ENCODE measurements at regions of chr6 and their contacts with region 1.

Region 1: GRCh38 chr6:144248476-144249301 is 36.4 kb upstream of the UTRN start:
- DNase-seq: no peak
- ATAC-seq: no peak
- H3K4me3 ChIP-seq: no peak overlapping the region
- H3K27ac ChIP-seq: no peak overlapping the region
- H3K4me1 ChIP-seq: no peaks in the 10 kb centered on the region
- H3K27me3 ChIP-seq: no peaks in the 10 kb centered on the region
- CTCF ChIP-seq: no peak

Region 2: DNA sequence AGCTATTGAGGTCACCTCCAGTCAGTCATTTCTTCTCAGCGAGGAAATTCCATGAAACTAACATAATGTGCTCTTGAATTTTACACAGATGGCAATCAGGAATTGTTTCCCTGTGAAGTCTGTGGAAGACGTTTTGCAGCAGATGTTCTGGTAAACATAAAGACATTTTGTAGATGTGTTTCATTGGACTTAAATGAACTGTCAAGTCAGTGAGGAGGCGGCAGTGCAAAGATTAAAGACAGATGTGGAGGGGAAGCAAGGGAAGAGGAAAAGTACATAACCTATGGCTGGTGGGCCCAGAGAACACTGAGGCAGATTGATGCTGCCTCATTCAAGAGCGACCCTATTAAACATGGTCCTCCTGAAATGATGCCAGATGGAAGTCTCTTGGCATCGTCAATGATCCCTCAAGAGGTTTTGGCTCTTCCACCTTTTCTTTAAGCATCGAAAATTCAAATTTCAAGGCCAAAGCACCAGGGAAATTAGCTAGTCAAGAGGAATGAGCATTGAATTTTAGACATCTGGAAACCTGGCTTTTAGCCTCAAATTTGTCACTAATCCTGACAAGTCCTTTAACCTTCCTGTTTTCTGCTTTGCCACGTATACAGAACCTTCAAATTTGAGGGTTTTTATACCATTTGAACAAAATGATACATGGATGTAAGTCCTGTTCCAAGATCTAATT is 364.3 kb before region 1 on chr6:
- CTCF ChIA-PET with region 1: no interaction called
- POLR2A ChIA-PET with region 1: no interaction called
- in situ Hi-C with region 1: no loop called
- intact Hi-C with region 1: no loop called
- DNase-seq: no peak
- ATAC-seq: no peak
- H3K4me3 ChIP-seq: no peak overlapping the region
- H3K27ac ChIP-seq: no peak overlapping the region
- H3K4me1 ChIP-seq: no peaks in the 10 kb centered on the region
- H3K27me3 ChIP-seq: peaks cover under 1% of the 10 kb centered on the region; the same call in 1 of the 2 replicates
- CTCF ChIP-seq: no peak

Region 3: GRCh38 chr6:144232176-144232831 is 16.4 kb before region 1 on chr6:
- CTCF ChIA-PET with region 1: interaction called, 10 read pairs
- POLR2A ChIA-PET with region 1: no interaction called
- in situ Hi-C with region 1: no loop called
- intact Hi-C with region 1: no loop called
- DNase-seq: no peak
- ATAC-seq: no peak
- H3K4me3 ChIP-seq: no peak overlapping the region
- H3K27ac ChIP-seq: no peak overlapping the region
- H3K4me1 ChIP-seq: no peaks in the 10 kb centered on the region
- H3K27me3 ChIP-seq: no peaks in the 10 kb centered on the region
- CTCF ChIP-seq: no peak

Region 4: DNA sequence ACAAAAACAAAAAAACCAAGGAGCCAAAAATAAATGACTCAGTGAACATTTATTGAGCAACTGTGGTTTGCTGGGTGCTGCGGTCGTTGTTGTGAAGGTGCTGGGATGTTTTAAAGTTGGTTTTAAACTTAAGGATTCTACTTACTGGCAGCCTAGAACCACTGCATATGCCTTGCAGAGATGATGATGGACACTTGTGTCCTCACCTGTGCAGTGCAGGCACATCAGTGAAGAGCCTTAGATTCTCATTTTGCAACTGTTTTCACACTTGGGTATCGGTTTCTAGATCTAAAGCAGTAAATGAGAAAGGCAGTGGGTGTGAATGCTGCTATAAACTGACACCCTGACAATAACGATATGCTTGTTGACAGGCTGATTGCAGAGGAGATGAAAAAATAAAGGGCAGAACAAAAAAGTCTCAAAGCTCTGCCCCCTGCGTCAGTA is 105.2 kb after region 1 on chr6:
- CTCF ChIA-PET with region 1: no interaction called
- POLR2A ChIA-PET with region 1: no interaction called
- in situ Hi-C with region 1: no loop called
- intact Hi-C with region 1: no loop called
- DNase-seq: no peak
- ATAC-seq: peak; percentile 18; the same call in 1 of the 2 replicates
- H3K4me3 ChIP-seq: no peak overlapping the region
- H3K27ac ChIP-seq: peak overlapping the region; percentile 78
- H3K4me1 ChIP-seq: peaks cover 58% of the 10 kb centered on the region
- H3K27me3 ChIP-seq: no peaks in the 10 kb centered on the region
- CTCF ChIP-seq: no peak

Region 5: DNA sequence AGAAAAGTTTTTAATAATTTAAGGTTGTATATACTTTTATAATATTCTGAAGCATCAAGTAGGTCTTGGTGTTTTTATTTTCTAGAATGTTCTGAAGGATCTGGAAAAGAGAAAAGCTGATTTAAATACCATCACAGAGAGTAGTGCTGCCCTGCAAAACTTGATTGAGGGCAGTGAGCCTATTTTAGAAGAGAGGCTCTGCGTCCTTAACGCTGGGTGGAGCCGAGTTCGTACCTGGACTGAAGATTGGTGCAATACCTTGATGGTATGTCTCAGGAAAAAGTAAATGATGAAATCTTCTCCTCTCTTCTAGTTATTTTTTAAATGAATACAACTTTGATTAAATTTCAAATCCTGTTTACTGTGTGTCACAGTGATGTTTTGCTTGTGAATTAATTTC is 262.2 kb after region 1 on chr6:
- CTCF ChIA-PET with region 1: no interaction called
- POLR2A ChIA-PET with region 1: no interaction called
- in situ Hi-C with region 1: no loop called
- intact Hi-C with region 1: no loop called
- DNase-seq: no peak
- ATAC-seq: no peak
- H3K4me3 ChIP-seq: no peak overlapping the region
- H3K27ac ChIP-seq: no peak overlapping the region
- H3K4me1 ChIP-seq: no peaks in the 10 kb centered on the region
- H3K27me3 ChIP-seq: no peaks in the 10 kb centered on the region
- CTCF ChIP-seq: no peak

Region 6: GRCh38 chr6:145480024-145480423 is 1231.3 kb after region 1 on chr6:
- CTCF ChIA-PET with region 1: no interaction called
- POLR2A ChIA-PET with region 1: interaction called, 11 read pairs
- in situ Hi-C with region 1: no loop called
- intact Hi-C with region 1: no loop called
- DNase-seq: no peak
- ATAC-seq: no peak
- H3K4me3 ChIP-seq: no peak overlapping the region
- H3K27ac ChIP-seq: no peak overlapping the region
- H3K4me1 ChIP-seq: peaks cover 21% of the 10 kb centered on the region
- H3K27me3 ChIP-seq: no peaks in the 10 kb centered on the region
- CTCF ChIP-seq: no peak